GM10248 (cell line): ENCODE measurements at regions of chr19 and their contacts with region 1.

Region 1: DNA sequence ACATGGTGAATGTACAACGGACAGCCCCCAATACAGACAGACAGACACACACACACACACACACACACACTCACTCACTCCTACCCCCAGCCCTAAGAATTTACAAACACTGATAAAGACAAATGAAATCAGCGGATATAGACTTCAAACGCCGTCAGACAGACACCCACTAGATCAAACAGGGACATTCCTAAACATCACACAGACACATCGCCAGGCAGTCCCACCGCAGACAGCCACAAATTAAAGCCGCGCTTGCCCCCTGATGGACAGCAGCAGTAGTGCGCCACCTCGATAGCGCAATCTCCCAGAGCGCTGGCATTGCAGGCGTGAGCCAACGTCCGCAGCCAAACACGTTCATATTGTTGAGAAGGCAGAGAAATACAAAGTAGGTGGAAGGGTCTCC is 24.7 kb upstream of the ADGRE1 start:
- DNase-seq: peak; percentile 87
- CTCF ChIP-seq: peak; percentile 97

Region 2: GRCh38 chr19:6516659-6517291 is 345.9 kb before region 1 on chr19:
- CTCF ChIA-PET with region 1: interaction called, 18 read pairs
- POLR2A ChIA-PET with region 1: no interaction called
- DNase-seq: peak; percentile 85
- CTCF ChIP-seq: peak; percentile 98

Region 3: GRCh38 chr19:6572217-6572616 is 290.5 kb before region 1 on chr19:
- CTCF ChIA-PET with region 1: no interaction called
- POLR2A ChIA-PET with region 1: no interaction called
- DNase-seq: no peak
- CTCF ChIP-seq: no peak

Region 4: DNA sequence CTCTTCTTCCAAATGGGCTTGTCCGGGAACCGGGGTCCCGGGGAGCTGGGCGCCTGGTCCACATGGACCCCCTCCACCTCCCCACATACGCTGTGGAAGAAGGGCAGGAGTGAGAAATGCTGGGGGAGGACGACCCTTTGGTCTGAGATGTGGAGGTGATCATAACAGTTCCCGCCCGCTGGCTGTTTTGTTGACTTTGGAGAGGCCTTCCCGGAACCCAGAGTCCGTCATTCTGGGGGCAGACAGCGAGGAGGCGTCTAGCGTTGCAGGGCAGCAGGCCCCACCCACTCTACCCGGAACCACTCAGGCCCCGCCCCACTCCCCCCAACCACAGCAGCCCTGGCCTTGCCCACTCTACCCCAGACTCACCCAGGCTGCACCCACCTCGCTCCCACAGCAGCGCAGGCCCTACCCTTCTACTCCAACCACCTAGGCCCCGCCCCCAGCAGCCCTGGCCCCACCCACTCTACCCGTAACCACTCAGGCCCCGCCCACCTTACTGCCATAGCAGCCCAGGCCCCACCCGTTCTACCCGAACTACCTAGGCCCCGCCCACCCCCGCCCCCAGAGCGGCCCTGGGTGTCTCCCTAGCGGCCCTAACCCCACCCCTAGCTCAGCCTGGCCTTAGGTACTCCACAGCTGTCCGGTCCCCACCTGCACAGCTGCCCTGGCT is 132.4 kb before region 1 on chr19:
- CTCF ChIA-PET with region 1: interaction called, 124 read pairs
- POLR2A ChIA-PET with region 1: no interaction called
- DNase-seq: no peak
- CTCF ChIP-seq: no peak

Region 5: GRCh38 chr19:6767357-6768235 is 95.1 kb before region 1 on chr19 and contains the start of gene SH2D3A:
- CTCF ChIA-PET with region 1: interaction called, 24 read pairs
- POLR2A ChIA-PET with region 1: interaction called, 3 read pairs
- DNase-seq: peak; percentile 95
- CTCF ChIP-seq: peak; percentile 3

Region 6: DNA sequence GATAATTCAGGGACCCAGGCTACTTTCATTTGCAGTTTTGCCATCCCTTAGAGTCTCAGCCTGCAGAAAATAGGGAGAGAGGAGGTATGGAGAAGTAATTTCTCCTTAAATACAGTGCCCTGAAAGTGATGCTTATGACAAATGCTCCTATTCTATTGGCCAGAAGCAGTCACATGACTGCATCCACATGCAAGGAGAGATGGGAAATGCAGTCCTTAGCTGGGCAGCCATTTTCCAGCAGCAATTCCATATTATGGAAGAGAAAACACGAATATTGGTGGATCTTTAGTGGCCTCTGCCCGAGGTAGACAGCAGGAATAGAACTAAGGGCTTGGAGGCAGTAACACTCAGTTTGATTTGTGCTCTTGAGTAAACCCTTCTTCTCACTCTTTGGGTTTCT is 50.8 kb before region 1 on chr19:
- CTCF ChIA-PET with region 1: interaction called, 10 read pairs
- POLR2A ChIA-PET with region 1: no interaction called
- DNase-seq: no peak
- CTCF ChIP-seq: no peak

Region 7: GRCh38 chr19:6876748-6877147 is 14.1 kb after region 1 on chr19:
- CTCF ChIA-PET with region 1: interaction called, 13 read pairs
- POLR2A ChIA-PET with region 1: no interaction called
- DNase-seq: no peak
- CTCF ChIP-seq: no peak

Region 8: DNA sequence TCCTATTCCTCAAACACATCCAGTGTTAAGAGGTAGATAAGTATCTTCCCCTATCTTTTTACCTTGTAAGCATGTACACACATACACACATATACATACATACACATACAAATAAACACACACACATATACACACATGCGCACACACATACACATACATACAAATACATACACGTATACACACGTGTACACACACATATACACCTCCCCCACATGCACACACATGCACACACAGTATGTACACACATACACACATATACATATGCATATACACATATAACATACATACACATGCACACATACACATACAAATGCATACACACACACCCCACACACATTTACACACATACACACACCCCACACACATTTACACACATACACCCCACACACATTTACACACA is 48.8 kb after region 1 on chr19:
- CTCF ChIA-PET with region 1: no interaction called
- POLR2A ChIA-PET with region 1: no interaction called
- DNase-seq: no peak
- CTCF ChIP-seq: no peak